BJ (cell line): ENCODE measurements at regions of chr17 and their contacts with region 1.

Region 1: DNA sequence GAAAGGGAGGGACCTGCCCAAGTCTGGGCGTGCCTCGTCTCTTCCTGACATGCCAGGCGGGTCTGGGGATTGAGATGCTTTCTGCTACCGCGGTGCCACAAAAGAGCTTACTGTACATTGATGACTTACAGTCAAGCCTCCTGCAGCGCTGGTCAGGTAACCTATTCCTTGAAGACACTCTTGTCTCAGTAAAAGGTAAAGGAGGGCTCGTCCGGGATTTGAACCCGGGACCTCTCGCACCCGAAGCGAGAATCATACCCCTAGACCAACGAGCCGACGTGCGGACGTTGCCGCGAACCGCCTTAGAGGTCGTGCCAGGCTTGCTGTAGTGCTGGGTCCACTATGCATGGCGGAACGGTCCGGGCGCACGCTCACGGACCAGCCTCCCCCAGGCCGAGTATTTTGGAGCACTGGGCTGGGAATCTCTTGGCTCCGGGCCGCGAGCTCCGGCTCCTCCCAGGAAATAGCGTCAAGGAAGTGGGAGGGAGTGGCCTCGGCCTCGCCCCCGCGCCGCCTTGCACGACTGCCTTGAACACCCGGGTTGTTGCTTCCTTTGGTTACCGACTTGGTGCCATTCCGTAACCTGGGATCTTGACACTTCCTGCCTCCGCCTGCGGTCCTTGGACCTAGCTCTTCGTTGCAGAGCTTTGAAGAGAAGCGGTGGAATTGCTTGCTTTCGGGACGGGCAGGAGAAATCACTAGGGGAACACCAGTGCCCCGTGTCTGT is 12.4 kb upstream of the AURKB start:
- DNase-seq: peak; percentile 68
- H3K4me3 ChIP-seq: peak overlapping the region; percentile 53
- H3K27me3 ChIP-seq: no peaks in the 10 kb centered on the region
- CTCF ChIP-seq: no peak

Region 2: DNA sequence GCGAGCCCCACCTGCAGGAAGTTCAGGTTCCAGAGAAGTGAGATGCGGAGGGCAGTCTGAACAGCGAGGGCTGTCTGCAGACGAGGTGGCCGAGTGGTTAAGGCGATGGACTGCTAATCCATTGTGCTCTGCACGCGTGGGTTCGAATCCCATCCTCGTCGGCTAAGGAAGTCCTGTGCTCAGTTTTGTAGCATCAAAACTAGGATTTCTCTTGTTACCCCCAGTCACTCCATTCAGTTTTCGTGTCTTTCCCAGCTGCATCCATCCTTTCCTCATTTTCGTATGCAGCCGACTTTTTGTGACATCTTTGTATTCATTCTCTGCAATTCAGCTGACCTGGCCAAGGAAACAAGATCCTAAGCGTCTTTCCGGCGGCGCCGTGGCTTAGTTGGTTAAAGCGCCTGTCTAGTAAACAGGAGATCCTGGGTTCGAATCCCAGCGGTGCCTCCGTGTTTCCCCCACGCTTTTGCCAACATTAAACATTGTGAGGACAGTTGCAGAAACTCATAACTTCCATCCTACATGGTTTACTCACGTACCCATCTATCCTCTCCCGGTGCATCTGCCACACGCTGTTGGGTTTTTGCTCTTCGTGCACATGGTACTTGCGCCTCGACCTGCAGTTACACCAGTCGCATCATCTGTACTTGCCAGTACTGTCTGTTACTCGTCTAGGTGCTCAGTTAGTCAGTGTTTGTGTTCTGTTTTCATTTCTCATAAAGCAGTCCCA is 35.8 kb before region 1 on chr17:
- CTCF ChIA-PET with region 1: interaction called, 10 read pairs
- POLR2A ChIA-PET with region 1: interaction called, 3 read pairs
- DNase-seq: peak; percentile 79
- H3K4me3 ChIP-seq: peak overlapping the region; percentile 72
- H3K27me3 ChIP-seq: no peaks in the 10 kb centered on the region
- CTCF ChIP-seq: peak; percentile 52; the same call in 1 of the 2 replicates

Region 3: GRCh38 chr17:8248751-8249607 is 26.2 kb after region 1 on chr17 and contains the start of gene PFAS:
- CTCF ChIA-PET with region 1: no interaction called
- POLR2A ChIA-PET with region 1: interaction called, 10 read pairs
- DNase-seq: peak; percentile 31
- H3K4me3 ChIP-seq: peak within 1 kb of the TSS; percentile 85
- H3K27me3 ChIP-seq: no peaks in the 10 kb centered on the region
- CTCF ChIP-seq: no peak
- polyA plus RNA-seq, gene PFAS: 12.2 and 15.6 TPM in 2 replicates